ENCODE measurements at regions of chr1 and their contacts with region 1.

Region 1: DNA sequence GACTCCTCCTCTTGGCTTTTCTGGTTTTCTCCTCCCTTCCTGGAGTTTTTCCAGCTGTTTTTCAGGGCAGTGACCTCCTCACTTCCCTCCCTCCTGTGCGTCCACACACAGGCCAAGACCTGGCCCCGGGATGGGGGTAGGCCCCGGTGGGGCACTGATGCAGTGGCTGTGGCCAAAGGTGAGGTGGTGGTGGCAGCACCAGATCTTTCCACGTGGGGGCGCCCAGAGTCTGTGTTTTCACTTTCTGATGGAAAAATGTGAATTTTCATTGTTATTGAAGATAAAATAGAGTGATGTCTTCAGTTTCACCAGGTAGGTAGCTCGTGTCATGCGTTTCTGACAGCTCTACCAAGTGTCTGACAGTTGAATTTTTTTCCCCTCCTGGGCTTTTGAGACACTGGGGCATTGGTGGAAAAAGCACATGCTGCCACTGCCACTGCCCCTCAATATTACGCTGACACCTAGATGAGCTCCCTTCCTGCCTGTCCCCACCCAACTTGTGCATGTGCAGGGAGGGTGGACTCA is 39.9 kb upstream of the MAGOH start:
- DNase-seq: peak; percentile 42 to 72
- ATAC-seq: peak; percentile 55 to 75 (median 66)
- H3K4me3 ChIP-seq: no peak overlapping the region
- H3K27ac ChIP-seq: no peak overlapping the region
- H3K4me1 ChIP-seq: no peaks in the 10 kb centered on the region
- H3K27me3 ChIP-seq: no peaks in the 10 kb centered on the region
- CTCF ChIP-seq: peak; percentile 94

Region 2: DNA sequence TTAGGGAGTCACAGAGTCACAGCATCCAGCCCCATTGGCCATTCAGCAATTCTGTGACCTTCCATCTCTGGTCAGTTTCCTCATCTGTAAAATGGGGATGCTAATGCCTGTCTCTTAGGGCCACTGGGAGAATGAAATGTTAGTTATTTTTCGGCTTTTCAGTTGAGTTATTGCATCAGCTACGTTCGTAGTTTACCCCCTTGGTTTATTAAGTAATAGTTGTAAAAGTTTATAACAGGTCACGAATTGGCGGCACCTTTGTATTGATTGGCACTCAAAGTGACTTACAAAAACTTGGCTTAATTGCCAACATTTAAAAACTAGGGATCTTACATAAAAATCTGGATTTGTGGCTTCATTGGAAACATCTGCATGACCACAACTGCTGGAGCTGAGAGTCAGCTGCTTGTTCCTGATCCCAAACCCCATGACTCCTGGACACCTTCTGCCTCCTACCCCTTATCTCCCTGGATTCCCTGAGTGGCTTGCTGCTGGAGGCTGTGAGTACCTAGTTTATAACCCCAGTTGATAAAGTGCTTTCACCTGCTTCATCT is 112.8 kb before region 1 on chr1:
- intact Hi-C with region 1: no loop called
- DNase-seq: no peak
- ATAC-seq: no peak
- H3K4me3 ChIP-seq: no peak overlapping the region
- H3K27ac ChIP-seq: no peak overlapping the region
- H3K4me1 ChIP-seq: no peaks in the 10 kb centered on the region
- H3K27me3 ChIP-seq: peaks cover 0 to 8% (median 0%) of the 10 kb centered on the region in 3 donors
- CTCF ChIP-seq: no peak

Region 3: DNA sequence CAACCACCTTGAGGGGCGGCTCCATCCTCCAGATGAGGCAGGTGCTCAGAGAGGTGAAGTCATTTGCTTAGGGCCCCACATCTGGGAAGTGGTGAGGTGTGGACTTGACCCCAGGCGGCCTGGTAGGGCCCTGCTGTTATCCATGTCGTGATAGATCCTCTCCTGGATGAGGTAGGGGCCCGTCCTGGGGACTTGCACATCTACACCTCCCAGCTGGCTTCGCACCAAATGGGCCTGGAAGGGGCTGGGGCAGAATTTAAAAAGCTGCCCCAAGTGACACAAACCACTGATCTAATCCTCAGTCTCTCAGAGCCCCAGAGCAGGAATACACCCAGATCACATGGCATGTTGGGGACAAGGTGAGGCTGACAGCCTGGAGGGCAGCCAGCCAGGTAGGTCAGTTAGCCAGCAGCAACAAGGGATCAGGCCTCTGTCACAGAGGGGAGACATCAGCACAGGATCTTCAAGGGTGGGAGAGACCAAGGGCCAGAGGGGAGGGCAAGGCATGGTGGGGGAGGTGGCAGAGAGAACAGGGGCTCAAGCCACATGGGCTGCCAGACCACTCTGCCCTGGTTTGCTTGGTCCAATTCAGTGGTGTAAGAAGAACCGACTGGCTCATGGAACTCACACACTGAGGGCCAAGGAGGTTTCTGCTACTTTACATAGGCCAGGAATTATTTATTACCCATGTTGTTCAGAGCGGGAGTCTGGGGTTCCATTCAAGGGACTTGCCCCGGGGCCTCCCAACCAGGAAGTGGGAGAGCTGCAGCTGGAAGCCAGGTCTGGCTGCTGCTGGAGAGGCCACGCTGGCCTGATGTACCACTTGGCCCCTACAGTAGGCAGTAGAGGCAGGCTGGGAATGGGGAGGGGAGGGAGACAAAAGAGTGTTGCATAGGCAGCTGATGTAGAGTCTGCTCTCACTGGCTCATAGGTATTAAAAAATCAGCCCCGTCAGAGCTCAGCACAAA is 37.5 kb after region 1 on chr1:
- intact Hi-C with region 1: no loop called
- DNase-seq: peak in 1 of 2 donors; percentile 22
- ATAC-seq: no peak
- H3K4me3 ChIP-seq: no peak overlapping the region
- H3K27ac ChIP-seq: no peak overlapping the region
- H3K4me1 ChIP-seq: peaks cover 4% of the 10 kb centered on the region
- H3K27me3 ChIP-seq: no peaks in the 10 kb centered on the region
- CTCF ChIP-seq: no peak

Region 4: GRCh38 chr1:53393325-53393792 is 115.1 kb after region 1 on chr1:
- intact Hi-C with region 1: loop called (anchors 1 kb)
- DNase-seq: peak; percentile 78 to 87
- ATAC-seq: peak; percentile 89 to 96 (median 90)
- H3K4me3 ChIP-seq: no peak overlapping the region
- H3K27ac ChIP-seq: no peak overlapping the region
- H3K4me1 ChIP-seq: no peaks in the 10 kb centered on the region
- H3K27me3 ChIP-seq: peaks cover 0 to 14% (median 0%) of the 10 kb centered on the region in 3 donors
- CTCF ChIP-seq: peak; percentile 97

Measured in psoas muscle (tissue), 8 donors.